ENCODE measurements at regions of chr2 and their contacts with region 1.

Region 1: DNA sequence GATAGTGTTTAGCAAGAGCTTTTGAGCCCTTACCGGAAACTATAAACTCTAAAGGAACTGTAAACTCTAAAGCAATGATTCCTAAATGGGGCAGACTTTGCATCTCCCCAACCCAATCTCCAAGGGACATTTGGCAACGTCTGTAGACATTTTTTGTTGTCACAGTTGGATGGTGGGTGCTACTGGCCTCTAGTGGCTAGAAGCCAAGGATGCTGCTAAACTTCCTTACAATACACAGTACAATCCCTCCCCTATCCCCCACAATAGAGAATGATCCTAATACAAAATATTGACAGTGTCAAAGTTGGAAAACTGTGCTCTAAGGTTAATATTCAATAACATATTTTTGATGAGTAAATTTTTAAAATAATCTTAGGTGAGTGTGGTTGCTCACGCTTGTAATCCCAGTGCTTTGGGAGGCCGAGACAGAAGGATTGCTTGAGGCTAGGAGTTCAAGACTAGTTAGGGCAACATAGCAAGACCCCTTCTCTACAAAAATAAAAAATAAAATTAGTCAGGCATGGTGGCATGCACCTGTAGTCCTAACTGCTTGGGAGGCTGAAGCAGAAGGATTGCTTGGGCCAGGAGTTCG is 66.7 kb downstream of the PTPN4 start:
- DNase-seq: peak; percentile 19
- H3K4me3 ChIP-seq: no peak overlapping the region
- H3K27ac ChIP-seq: no peak overlapping the region
- H3K4me1 ChIP-seq: no peaks in the 10 kb centered on the region
- H3K27me3 ChIP-seq: no peaks in the 10 kb centered on the region
- CTCF ChIP-seq: peak; percentile 18 to 45 (median 40)
- EP300 ChIP-seq: no peak
- POLR2A ChIP-seq: no peak

Region 2: GRCh38 chr2:119759451-119760236 is 66.8 kb before region 1 on chr2 and contains the start of gene PTPN4:
- in situ Hi-C with region 1: loop called in 2 of 4 experiments (anchors 10 kb)
- intact Hi-C with region 1: loop called (anchors 5 kb)
- DNase-seq: peak; percentile 98
- H3K4me3 ChIP-seq: peak within 1 kb of the TSS; percentile 79 to 94 (median 89)
- H3K27ac ChIP-seq: peak within 1 kb of the TSS; percentile 91 to 98 (median 97)
- H3K4me1 ChIP-seq: peaks cover 12 to 40% (median 26%) of the 10 kb centered on the region in 4 donors
- H3K27me3 ChIP-seq: no peaks in the 10 kb centered on the region
- CTCF ChIP-seq: no peak
- EP300 ChIP-seq: no peak
- POLR2A ChIP-seq: peak; percentile 95
- total RNA-seq, gene PTPN4: 18.7 to 46.6 (median 25.8) TPM

Region 3: DNA sequence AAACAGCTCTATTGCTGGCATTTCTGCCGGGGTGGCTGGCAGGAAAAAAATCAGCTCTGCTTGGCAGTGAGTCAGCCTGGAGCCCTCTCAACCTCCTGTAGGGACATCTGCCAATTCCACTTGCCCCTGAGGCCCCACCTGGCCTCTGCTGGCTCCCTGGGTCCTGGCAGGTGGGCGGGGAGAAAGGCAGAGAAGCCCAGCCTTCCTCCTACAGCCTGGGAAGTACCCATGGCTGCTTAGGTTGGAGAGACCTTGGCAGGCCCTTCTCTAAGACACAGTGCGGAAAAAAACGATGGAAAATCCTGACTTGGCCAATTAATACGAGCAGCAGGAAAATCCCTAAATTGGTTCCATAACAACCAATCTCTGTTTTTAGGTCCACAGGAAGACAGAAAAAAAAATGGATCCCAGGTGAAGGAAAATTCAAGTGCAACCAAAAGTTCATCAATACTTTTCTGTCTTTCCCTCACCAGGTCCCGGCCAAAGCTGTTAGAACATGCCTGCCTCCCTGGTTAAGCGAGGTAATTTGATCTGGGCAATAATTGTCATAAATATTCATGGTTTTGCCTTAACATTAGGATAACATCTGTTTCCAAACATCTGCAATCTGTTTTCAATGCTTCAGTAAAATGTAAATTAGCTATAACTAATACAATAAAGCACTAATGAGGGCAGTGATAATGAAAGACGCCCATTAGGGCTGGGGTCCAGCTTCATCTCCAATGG is 1212.6 kb after region 1 on chr2:
- in situ Hi-C with region 1: no loop called
- intact Hi-C with region 1: no loop called
- DNase-seq: no peak
- H3K4me3 ChIP-seq: no peak overlapping the region
- H3K27ac ChIP-seq: no peak overlapping the region
- H3K4me1 ChIP-seq: peaks cover 0 to 7% (median 0%) of the 10 kb centered on the region in 4 donors
- H3K27me3 ChIP-seq: peaks cover 5% of the 10 kb centered on the region
- CTCF ChIP-seq: no peak
- EP300 ChIP-seq: no peak
- POLR2A ChIP-seq: no peak

Measured in transverse colon (tissue), 4 donors.